ENCODE measurements at regions of chrX and their contacts with region 1.

Region 1: DNA sequence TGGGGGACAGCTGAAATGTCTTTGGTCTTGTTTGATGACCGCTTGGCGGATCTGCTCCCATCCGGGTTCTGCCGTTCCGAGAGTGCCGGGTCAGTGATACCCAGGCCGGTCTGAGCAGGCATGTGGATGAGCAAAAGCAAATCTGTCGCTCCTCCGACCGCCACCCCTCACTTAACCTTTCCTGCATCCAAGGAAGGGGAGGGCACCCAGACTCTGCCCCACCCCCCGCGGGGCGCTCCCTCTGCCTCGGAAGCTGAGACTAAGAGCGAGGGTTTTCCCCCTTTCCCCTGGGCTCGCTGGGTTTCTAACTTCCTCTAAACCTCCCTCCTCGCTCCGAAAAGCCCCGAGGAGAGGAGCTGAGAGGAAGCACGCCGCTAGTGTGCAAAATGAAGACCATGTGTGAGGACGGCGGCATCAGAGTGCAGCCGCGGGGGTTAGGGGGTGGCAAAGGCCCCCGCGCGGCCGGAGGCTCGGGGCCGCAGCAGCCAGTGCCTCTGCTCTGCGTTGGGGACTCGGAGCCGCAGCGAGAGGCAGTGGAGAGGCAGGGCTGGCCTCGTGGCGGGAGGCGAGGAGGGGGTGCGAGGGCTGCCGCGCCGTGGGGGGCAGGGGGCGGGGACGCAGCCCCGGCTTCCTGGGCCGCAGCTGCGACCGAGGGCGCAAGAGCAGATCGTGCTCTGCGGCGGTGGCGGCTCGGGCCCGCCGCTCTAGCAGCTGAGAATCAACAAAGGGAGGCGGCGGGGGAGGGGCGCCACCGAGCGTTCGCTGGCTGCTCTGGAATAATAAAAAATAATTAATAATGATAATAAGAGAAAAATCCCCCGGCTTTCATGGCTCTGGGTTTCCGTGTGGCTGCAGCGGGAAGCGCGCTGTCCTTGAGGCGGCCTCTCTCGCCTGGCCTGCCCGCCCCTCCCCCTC is 55.8 kb upstream of the BCOR start:
- DNase-seq: peak; percentile 71
- H3K4me3 ChIP-seq: peak overlapping the region; percentile 36
- H3K27ac ChIP-seq: no peak overlapping the region
- H3K4me1 ChIP-seq: peaks cover 3% of the 10 kb centered on the region
- H3K27me3 ChIP-seq: peaks cover 57% of the 10 kb centered on the region
- CTCF ChIP-seq: no peak

Region 2: GRCh38 chrX:39957816-39958566 is 195.6 kb before region 1 on chrX:
- intact Hi-C with region 1: no loop called
- DNase-seq: no peak
- H3K4me3 ChIP-seq: no peak overlapping the region
- H3K27ac ChIP-seq: no peak overlapping the region
- H3K4me1 ChIP-seq: no peaks in the 10 kb centered on the region
- H3K27me3 ChIP-seq: no peaks in the 10 kb centered on the region
- CTCF ChIP-seq: no peak

Region 3: GRCh38 chrX:40083120-40083978 is 70.2 kb before region 1 on chrX:
- intact Hi-C with region 1: no loop called
- DNase-seq: no peak
- H3K4me3 ChIP-seq: peak overlapping the region; percentile 34
- H3K27ac ChIP-seq: no peak overlapping the region
- H3K4me1 ChIP-seq: peaks cover 6% of the 10 kb centered on the region
- H3K27me3 ChIP-seq: peaks cover 18% of the 10 kb centered on the region
- CTCF ChIP-seq: no peak

Region 4: DNA sequence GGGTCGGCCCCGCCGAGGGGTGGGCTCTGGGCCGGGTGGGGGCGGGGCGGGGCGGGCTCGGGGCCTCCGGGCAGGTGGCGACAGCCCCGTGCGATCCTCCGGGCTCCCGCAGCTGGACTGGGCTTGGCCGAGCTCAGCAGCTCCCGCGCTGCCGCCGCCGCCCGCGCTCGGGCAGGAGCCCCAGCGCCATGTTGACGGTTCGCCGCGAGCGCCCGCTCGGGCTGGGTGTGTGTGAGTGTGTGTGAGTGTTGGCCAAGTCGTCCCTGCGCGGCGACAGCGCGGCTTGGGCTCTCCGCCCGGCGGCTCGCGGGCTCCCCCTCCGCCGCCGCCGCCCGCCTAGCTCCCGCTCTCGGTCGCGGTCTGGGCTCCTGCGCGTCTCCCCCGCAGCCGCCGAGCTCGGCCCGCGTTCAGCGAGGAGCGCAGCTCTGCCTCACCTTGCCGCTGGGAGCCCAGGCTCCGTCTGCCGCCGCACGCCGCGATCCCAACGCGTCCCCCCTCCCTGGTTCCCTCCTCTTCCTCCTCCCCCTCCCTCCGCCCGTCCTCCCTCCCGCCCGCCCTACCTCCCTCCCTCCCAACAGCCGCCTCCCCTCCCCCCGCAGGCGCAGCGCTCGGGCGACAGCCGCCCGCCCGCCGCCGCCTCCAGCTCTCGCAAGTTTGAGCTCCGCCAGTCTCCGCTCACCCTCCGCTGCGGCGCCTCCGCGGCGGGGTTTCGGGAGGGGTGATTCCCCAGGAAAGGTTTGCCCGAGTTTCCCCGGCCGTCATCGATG is 55.9 kb before region 1 on chrX and contains the start of gene BCOR:
- intact Hi-C with region 1: loop called (anchors 5 kb)
- DNase-seq: peak; percentile 81
- H3K4me3 ChIP-seq: peak within 1 kb of the TSS; percentile 63
- H3K27ac ChIP-seq: peak within 1 kb of the TSS; percentile 91
- H3K4me1 ChIP-seq: no peaks in the 10 kb centered on the region
- H3K27me3 ChIP-seq: peaks cover 36% of the 10 kb centered on the region
- CTCF ChIP-seq: no peak
- total RNA-seq, gene BCOR: 18.3 to 21.3 TPM

Measured in colonic mucosa (tissue), 4 donors.